Posterior cingulate gyrus (tissue), 11 donors: ENCODE measurements at regions of chr12 and their contacts with region 1.

Region 1: DNA sequence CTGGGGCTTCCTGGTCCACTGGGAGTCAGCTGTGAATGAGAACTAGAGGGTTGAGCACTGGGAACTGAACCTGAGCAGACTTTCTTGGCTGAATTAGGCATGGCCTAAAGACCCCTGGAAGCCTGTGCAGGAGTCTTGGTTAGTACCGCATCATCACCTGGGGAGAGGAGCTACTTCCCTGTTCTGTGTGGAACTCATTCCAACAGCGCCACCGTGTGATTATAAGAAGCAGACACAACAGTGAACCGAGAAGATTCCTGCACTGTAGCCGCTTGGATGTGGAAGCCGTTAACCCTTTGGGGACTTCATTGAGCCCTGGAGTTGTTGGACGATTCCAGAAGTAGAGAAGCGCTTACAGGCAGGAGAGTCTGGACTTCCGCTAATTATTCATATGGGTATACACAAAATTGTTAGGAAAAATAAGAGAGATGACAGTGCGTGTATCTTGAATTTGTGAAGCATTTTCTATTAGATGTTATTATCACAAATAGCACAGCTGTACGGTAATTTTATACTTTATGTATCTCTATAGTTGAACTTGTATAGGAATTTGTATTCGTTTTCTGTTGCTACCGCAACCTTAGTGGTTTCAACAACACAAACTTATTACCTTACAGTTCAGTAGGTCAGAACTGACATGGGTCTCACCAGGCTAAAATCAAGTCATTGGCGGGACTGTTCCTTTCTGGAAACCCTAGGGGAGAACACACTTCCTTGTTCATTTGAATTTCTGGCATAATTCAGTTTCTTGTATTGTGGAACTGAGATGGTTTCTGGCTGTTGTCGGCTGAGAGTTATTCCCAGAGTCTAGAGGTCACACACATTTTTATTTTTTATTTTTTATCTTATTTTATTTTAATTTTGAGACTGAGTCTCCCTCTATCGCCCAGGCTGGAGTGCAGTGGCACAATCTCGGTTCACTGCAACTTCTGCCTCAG is 100.7 kb downstream of the C2CD5 start:
- DNase-seq: peak in 8 of 10 donors; percentile 18 to 88 (median 59)

Region 2: GRCh38 chr12:22083167-22083566 is 360.5 kb before region 1 on chr12:
- intact Hi-C with region 1: loop called (anchors 1 kb)
- DNase-seq: peak in 1 of 10 donors; percentile 26

Region 3: GRCh38 chr12:22380031-22380430 is 63.6 kb before region 1 on chr12:
- intact Hi-C with region 1: no loop called
- DNase-seq: no peak